SK-N-SH (cell line): ENCODE measurements at regions of chr11 and their contacts with region 1.

Region 1: GRCh38 chr11:3854977-3855807 is at the start of gene STIM1:
- DNase-seq: peak; percentile 95
- H3K4me3 ChIP-seq: peak within 1 kb of the TSS; percentile 87 to 89
- H3K27ac ChIP-seq: peak within 1 kb of the TSS; percentile 82 to 88
- H3K4me1 ChIP-seq: peaks cover 27 to 28% of the 10 kb centered on the region in 2 experiments; a peak in 3 of 4 replicates
- H3K27me3 ChIP-seq: no peaks in the 10 kb centered on the region
- CTCF ChIP-seq: peak; percentile 83
- EP300 ChIP-seq: peak; percentile 19 to 25; a peak in 2 of 4 replicates
- RAD21 ChIP-seq: peak; percentile 85
- polyA plus RNA-seq, gene STIM1: 21.8 and 29.5 TPM in 2 replicates

Region 2: DNA sequence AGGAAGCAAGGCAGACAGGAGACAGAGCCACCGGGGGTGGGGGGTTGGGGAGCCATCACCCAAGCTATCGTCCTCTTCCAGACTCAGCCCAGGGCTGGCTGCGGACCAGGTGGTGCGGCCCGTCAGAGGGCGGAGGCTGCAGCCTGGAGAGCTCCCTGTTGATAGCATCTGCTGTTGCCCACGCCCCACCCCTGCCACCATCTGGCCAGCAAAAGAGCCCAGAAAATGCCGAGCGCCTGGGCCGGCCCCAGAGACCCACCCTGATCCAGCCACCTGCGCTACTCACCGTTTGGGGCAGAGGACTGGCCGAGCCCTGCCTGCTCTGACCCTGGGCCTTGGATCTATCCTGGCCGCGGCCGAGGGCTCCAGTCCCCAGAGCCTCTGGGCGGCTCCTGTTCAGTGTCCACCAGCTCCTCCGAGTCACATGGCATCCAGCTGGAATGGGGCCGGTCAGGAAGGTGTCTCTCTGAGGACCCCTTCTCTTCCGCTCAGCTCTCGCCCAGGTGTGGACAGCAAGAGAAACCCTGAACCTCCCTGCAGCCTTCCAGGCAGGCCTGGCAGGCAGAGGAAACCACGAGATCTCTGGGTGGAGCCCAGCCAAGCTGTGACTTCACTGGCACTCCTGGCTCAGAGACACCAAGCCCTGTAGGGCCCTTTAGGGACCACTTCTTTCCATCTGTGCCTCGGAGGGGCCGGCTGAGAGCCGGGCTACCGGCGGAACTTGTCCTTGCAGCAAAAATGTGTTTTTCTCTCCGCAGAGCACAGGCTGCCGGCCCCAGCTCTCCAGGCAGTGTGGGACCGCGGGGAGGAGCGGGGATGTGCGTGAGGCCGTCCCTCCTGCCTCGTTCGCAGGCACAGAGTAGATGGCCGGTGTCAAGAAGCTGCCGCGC is 623.1 kb before region 1 on chr11 and contains the start of gene MRGPRE:
- CTCF ChIA-PET with region 1: no interaction called
- POLR2A ChIA-PET with region 1: no interaction called
- DNase-seq: peak; percentile 74
- H3K4me3 ChIP-seq: no peak within 1 kb of the TSS
- H3K27ac ChIP-seq: no peak within 1 kb of the TSS; a peak in 1 of 4 replicates
- H3K4me1 ChIP-seq: peaks cover 0 to 14% of the 10 kb centered on the region in 2 experiments; a peak in 1 of 4 replicates
- H3K27me3 ChIP-seq: no peaks in the 10 kb centered on the region
- CTCF ChIP-seq: no peak
- EP300 ChIP-seq: no peak
- RAD21 ChIP-seq: no peak
- polyA plus RNA-seq, gene MRGPRE: not detected in 2 replicates

Region 3: GRCh38 chr11:3378426-3379423 is 476.5 kb before region 1 on chr11 and contains the start of gene ZNF195:
- CTCF ChIA-PET with region 1: no interaction called
- POLR2A ChIA-PET with region 1: no interaction called
- DNase-seq: peak; percentile 98
- H3K4me3 ChIP-seq: peak within 1 kb of the TSS; percentile 96 to 98
- H3K27ac ChIP-seq: peak within 1 kb of the TSS; percentile 68 to 94
- H3K4me1 ChIP-seq: peaks cover 16 to 45% of the 10 kb centered on the region in 2 experiments; a peak in 3 of 4 replicates
- H3K27me3 ChIP-seq: no peaks in the 10 kb centered on the region
- CTCF ChIP-seq: no peak
- EP300 ChIP-seq: 0 out of 4 replicates have a peak, but pooled peaks of 1 of the 2 experiments have one; percentile 24
- RAD21 ChIP-seq: peak; percentile 15; the same call in 1 of the 2 replicates
- polyA plus RNA-seq, gene ZNF195: 13.2 and 21.7 TPM in 2 replicates

Region 4: DNA sequence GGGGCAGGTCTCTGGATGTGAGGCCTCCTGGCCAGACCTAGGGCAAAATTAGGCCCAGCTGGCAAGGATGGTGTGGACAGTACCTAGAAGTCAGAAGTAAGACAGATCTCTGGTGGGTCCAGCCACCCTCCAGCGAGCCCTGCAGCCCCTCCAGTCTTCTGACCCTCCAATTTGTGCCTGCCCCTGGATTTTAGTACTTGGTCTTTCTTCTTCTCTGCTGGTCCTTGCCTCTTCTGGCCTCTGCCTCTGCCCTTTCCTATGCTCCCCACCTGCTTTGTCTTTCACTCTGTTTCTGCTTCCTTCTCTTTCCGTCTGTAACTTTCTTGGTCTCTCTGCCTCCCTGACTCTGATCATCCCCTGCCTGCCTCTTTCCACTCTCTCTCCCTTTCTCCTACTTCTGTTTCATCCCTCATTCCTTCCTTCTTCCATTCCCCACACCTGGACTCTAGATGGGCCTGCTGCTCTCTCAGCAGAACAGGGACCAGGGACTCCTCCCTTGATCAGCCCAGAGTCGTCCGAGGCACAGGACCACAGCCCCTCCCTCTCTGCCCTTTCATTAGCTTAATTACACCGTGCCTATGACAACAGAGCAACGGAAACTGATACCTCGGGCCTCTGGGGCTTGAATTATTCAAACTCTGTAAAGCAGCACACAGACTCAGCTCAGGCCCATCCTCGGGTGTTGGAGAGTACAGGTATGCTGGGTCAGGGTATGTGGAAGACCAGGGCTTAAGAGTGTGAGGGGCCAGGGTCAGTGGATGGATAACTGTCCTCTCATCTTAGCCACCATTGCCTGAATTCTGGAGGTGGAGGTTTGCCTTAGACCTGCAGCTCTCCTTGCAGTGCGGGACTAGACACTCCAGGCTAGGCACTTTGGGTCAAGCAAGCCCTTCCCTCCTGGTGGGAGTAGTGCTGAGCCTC is 183.6 kb before region 1 on chr11 and contains the start of gene CHRNA10:
- CTCF ChIA-PET with region 1: no interaction called
- POLR2A ChIA-PET with region 1: no interaction called
- DNase-seq: no peak
- H3K4me3 ChIP-seq: no peak within 1 kb of the TSS
- H3K27ac ChIP-seq: no peak within 1 kb of the TSS
- H3K4me1 ChIP-seq: no peaks in the 10 kb centered on the region; a peak in 1 of 4 replicates
- H3K27me3 ChIP-seq: no peaks in the 10 kb centered on the region
- CTCF ChIP-seq: no peak
- EP300 ChIP-seq: no peak
- RAD21 ChIP-seq: no peak
- polyA plus RNA-seq, gene CHRNA10: 1.1 TPM in 2 replicates

Region 5: DNA sequence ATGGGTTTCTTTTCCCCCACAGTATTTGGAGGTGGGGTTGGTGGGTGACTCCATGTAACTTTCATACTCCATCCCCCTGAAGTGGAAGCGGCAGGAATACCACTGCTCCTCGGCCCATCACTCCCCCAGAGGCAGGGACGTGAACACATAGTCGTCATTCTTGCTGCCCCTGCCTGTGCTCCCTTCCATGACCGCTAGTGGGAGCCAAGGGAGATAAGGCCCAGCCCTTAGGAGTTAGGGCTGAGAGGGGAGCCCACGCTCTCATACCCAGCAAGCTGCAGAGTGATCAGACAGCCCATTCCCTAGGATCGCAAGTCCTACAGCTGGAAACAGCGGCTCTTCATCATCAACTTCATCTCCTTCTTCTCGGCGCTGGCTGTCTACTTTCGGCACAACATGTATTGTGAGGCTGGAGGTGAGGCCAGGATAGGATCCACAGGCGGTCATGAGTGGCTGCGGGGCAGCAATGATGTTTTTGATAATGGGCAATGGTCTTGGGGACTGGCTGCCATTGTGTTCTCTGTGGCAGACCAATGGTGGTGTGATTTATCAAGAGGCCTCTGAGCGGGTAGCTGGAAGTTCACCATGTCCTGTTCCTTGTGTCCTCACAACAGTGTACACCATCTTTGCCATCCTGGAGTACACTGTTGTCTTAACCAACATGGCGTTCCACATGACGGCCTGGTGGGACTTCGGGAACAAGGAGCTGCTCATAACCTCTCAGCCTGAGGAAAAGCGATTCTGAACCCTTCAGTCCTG is 30.3 kb before region 1 on chr11:
- CTCF ChIA-PET with region 1: interaction called, 10 read pairs
- POLR2A ChIA-PET with region 1: no interaction called
- DNase-seq: peak; percentile 58
- H3K4me3 ChIP-seq: no peak overlapping the region; a peak in 1 of 4 replicates
- H3K27ac ChIP-seq: no peak overlapping the region
- H3K4me1 ChIP-seq: no peaks in the 10 kb centered on the region
- H3K27me3 ChIP-seq: no peaks in the 10 kb centered on the region
- CTCF ChIP-seq: peak; percentile 52
- EP300 ChIP-seq: no peak
- RAD21 ChIP-seq: no peak

Region 6: GRCh38 chr11:3879216-3879966 is 24.2 kb after region 1 on chr11:
- CTCF ChIA-PET with region 1: interaction called, 16 read pairs
- POLR2A ChIA-PET with region 1: no interaction called
- DNase-seq: no peak
- H3K4me3 ChIP-seq: no peak overlapping the region
- H3K27ac ChIP-seq: no peak overlapping the region
- H3K4me1 ChIP-seq: peaks cover 6 to 11% of the 10 kb centered on the region in 2 experiments; a peak in 2 of 4 replicates
- H3K27me3 ChIP-seq: no peaks in the 10 kb centered on the region
- CTCF ChIP-seq: no peak
- EP300 ChIP-seq: no peak
- RAD21 ChIP-seq: no peak

Region 7: DNA sequence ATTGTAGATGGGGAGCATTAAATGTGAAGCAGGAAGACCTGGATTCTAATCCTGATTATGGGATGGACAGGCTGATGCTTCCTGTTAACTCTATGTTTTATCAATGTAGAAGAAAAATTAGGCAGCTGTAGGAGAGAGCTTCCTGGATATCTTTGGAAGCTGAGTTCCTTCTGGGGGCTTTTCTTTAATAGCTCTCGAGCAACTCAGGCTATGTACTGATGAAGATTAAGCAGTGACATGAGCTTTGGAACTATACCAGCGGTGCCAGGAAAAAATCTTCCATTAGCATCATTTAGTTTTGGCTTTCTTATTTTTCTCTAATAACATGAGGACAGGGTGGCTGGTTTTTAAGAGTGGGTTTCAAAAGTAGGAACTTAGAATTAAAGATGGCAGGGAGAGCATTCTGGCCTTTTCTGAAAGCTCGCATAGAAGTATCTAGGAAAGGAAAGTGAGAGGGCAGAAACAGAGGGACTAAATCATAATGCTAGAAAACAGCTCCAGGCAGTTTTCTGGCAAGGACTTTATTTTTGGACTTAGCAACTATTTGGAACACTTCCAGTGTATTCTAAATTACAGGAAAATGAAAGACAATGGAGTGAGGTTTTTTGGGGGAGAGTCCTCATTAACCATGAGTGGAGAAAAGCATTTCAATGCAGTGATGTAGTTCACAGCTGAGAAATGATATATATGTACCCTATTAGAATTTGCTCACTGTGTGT is 170.2 kb after region 1 on chr11:
- CTCF ChIA-PET with region 1: interaction called, 23 read pairs
- POLR2A ChIA-PET with region 1: no interaction called
- DNase-seq: peak; percentile 44
- H3K4me3 ChIP-seq: no peak overlapping the region
- H3K27ac ChIP-seq: peak overlapping the region; percentile 73 to 93
- H3K4me1 ChIP-seq: peaks cover 15 to 18% of the 10 kb centered on the region in 2 experiments; a peak in 3 of 4 replicates
- H3K27me3 ChIP-seq: no peaks in the 10 kb centered on the region
- CTCF ChIP-seq: no peak
- EP300 ChIP-seq: peak in 1 of 2 experiments; percentile 33; a peak in 1 of 4 replicates
- RAD21 ChIP-seq: peak; percentile 22; the same call in 1 of the 2 replicates

Region 8: DNA sequence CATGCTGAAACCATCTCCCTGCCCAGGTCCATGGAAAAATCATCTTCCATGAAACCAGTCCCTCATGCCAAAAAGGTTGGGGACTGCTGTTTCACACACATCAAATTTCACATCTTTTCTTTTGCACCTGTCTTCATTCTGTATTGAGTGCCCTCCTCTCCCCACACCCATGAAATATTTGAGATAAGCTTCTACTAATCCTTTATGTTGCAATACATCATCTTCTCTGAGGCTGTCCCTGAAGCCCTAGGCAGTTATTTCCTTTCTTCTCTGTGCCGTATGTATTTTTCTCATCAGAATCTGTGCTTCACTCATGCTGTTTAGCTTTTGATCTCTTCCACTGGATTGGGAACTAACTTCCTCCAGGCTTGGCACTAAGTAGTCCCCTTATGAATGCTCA is 199.5 kb after region 1 on chr11:
- CTCF ChIA-PET with region 1: interaction called, 14 read pairs
- POLR2A ChIA-PET with region 1: no interaction called
- DNase-seq: no peak
- H3K4me3 ChIP-seq: no peak overlapping the region
- H3K27ac ChIP-seq: no peak overlapping the region
- H3K4me1 ChIP-seq: peaks cover 0 to 6% of the 10 kb centered on the region in 2 experiments; a peak in 2 of 4 replicates
- H3K27me3 ChIP-seq: no peaks in the 10 kb centered on the region
- CTCF ChIP-seq: no peak
- EP300 ChIP-seq: no peak
- RAD21 ChIP-seq: no peak